ENCODE measurements at regions of chr12 and their contacts with region 1.

Region 1: DNA sequence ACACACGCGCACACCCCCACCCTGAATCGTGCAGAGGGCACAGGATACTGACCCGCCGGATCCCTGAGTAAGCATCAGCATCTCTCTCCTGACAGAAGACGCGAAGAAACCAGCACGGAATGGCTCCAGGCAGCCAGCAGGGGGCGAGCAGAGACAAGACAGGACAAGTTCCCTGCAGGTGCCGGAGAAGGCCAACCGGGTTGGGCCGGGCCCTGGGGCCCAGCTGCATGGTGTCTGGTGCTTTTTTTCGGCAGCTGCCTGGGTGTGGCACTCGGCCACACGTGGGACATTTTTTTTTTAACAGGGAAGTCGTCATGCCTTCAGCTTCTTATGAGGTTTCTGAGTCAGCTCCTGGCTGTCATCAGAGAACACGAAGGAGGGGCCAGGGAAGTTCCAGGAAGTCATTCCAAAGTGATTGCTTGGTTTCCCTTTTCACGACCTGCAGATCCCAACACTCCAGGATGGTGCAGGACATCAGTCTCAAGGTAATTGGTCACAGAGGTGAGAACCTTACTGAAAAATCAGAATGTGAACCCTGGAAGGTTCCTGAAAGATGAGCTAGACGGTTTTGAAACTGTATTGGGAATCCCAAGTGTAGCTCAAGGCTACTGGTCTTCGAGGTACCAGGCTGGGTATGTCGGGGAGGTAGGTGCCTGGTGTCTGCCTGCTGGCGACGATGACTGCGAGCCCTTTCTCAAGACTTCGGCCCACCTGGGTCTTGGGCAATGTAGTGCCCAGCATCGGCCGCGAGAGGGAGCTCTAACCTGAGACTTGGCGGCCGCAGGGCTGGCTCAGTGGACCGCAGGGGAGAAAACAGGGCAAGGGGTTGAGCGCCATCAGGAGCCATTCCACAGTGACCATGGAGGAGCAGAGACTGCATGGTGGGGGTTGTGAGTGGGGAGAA is 190.8 kb upstream of the PRMT8 start:
- DNase-seq: peak; percentile 89
- ATAC-seq: peak; percentile 86
- H3K4me3 Mint-ChIP-seq: peak overlapping the region; percentile 28
- H3K27ac Mint-ChIP-seq: peak overlapping the region; percentile 62
- H3K4me1 Mint-ChIP-seq: peaks cover 11% of the 10 kb centered on the region
- H3K27me3 Mint-ChIP-seq: peaks cover 19% of the 10 kb centered on the region
- CTCF ChIP-seq: peak; percentile 86

Region 2: DNA sequence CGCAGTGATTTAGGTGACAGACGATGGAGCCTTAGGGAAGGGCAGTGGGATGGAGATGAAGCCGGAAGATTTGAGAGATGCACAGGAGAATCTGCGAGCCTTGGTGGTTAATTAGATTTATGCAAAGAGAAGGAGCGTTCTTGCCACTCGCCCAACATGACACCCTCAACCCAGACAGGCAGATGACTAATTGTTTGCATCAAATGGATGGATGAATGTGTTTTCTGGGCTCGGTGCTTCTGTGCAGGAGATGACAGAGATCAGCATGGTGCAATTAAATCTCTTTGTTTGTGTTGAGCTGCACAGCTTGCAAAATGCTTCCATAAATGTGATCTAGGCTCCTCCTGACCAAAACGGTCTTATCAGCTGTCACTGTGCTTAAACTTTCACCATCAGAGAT is 11.5 kb before region 1 on chr12:
- CTCF ChIA-PET with region 1: interaction called, 36 read pairs
- POLR2A ChIA-PET with region 1: no interaction called
- intact Hi-C with region 1: no loop called
- DNase-seq: no peak
- ATAC-seq: no peak
- H3K4me3 Mint-ChIP-seq: no peak overlapping the region
- H3K27ac Mint-ChIP-seq: no peak overlapping the region
- H3K4me1 Mint-ChIP-seq: no peaks in the 10 kb centered on the region
- H3K27me3 Mint-ChIP-seq: no peaks in the 10 kb centered on the region
- CTCF ChIP-seq: no peak

Region 3: GRCh38 chr12:3352230-3352629 is 52.0 kb after region 1 on chr12:
- CTCF ChIA-PET with region 1: interaction called, 10 read pairs
- POLR2A ChIA-PET with region 1: no interaction called
- intact Hi-C with region 1: no loop called
- DNase-seq: no peak
- ATAC-seq: no peak
- H3K4me3 Mint-ChIP-seq: no peak overlapping the region
- H3K27ac Mint-ChIP-seq: no peak overlapping the region
- H3K4me1 Mint-ChIP-seq: no peaks in the 10 kb centered on the region
- H3K27me3 Mint-ChIP-seq: peaks cover 2% of the 10 kb centered on the region
- CTCF ChIP-seq: no peak

Region 4: GRCh38 chr12:3533703-3534386 is 233.7 kb after region 1 on chr12:
- CTCF ChIA-PET with region 1: interaction called, 10 read pairs
- POLR2A ChIA-PET with region 1: no interaction called
- intact Hi-C with region 1: no loop called
- DNase-seq: no peak
- ATAC-seq: no peak
- H3K4me3 Mint-ChIP-seq: no peak overlapping the region
- H3K27ac Mint-ChIP-seq: no peak overlapping the region
- H3K4me1 Mint-ChIP-seq: no peaks in the 10 kb centered on the region
- H3K27me3 Mint-ChIP-seq: no peaks in the 10 kb centered on the region
- CTCF ChIP-seq: no peak

Region 5: GRCh38 chr12:3777206-3777809 is 477.1 kb after region 1 on chr12:
- CTCF ChIA-PET with region 1: interaction called, 12 read pairs
- POLR2A ChIA-PET with region 1: no interaction called
- intact Hi-C with region 1: no loop called
- DNase-seq: peak; percentile 12
- ATAC-seq: peak; percentile 64
- H3K4me3 Mint-ChIP-seq: no peak overlapping the region
- H3K27ac Mint-ChIP-seq: no peak overlapping the region
- H3K4me1 Mint-ChIP-seq: peaks cover 4% of the 10 kb centered on the region
- H3K27me3 Mint-ChIP-seq: no peaks in the 10 kb centered on the region
- CTCF ChIP-seq: peak; percentile 65

Measured in activated CD8-positive, alpha-beta T cell treated with anti-CD3 and anti-CD28 coated beads for 36 hours (primary cell).